B cell (primary cell): ENCODE measurements at regions of chr3 and their contacts with region 1.

Region 1: DNA sequence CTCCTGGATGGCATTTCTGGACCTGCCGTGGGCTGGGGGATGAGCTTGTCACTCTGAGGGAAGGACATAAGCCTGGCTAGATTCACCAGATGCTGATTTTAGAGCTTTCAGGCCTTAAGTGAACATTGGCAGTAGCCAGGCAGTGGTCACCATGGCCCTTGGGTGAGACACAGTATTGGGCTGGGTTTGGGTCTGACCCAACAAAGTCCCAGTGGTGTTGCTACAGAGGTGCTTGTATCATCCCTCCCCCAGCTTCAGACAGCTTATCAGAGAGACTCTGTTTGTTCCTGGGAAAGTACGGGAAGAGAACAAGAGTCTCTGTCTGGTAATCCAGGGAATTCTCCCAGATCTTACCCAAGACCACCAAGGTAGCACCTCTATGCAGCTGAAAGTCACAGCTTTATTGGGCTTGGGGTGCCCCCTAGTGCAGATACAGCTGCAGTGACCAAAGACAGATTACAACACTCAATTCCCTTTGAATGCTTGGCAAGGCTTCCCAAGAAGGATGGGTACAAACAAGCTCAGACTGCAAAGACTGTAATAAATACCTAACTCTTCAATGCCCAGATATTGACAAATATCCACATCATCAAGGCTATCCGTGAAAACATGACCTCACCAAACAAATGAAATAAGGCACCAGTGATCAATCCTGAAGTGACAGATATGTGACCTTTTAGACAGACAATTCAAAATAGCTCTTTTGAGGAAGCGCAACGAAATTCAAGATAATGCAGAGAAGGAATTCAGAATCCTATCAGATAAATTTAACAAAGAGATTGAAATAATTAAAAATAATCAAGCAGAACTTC is 9.9 kb upstream of the RUVBL1 start:
- DNase-seq: peak; percentile 49
- ATAC-seq: peak; percentile 49
- H3K4me3 ChIP-seq: no peak overlapping the region
- H3K4me3 Mint-ChIP-seq: no peak overlapping the region
- H3K27ac ChIP-seq: no peak overlapping the region
- H3K27ac Mint-ChIP-seq: no peak overlapping the region
- H3K4me1 ChIP-seq: no peaks in the 10 kb centered on the region
- H3K4me1 Mint-ChIP-seq: no peaks in the 10 kb centered on the region
- H3K27me3 ChIP-seq: peaks cover 0 to 3% (median 0%) of the 10 kb centered on the region in 4 experiments
- H3K27me3 Mint-ChIP-seq: peaks cover 17% of the 10 kb centered on the region
- CTCF ChIP-seq: peak; percentile 55

Region 2: GRCh38 chr3:127723011-127723567 is 410.4 kb before region 1 on chr3:
- CTCF ChIA-PET with region 1: no interaction called
- POLR2A ChIA-PET with region 1: no interaction called
- intact Hi-C with region 1: no loop called
- DNase-seq: no peak
- ATAC-seq: no peak
- H3K4me3 ChIP-seq: no peak overlapping the region
- H3K4me3 Mint-ChIP-seq: no peak overlapping the region
- H3K27ac ChIP-seq: no peak overlapping the region
- H3K27ac Mint-ChIP-seq: peak overlapping the region; percentile 11
- H3K4me1 ChIP-seq: no peaks in the 10 kb centered on the region
- H3K4me1 Mint-ChIP-seq: no peaks in the 10 kb centered on the region
- H3K27me3 ChIP-seq: no peaks in the 10 kb centered on the region
- H3K27me3 Mint-ChIP-seq: no peaks in the 10 kb centered on the region
- CTCF ChIP-seq: no peak

Region 3: GRCh38 chr3:128068211-128068620 is 65.3 kb before region 1 on chr3:
- CTCF ChIA-PET with region 1: interaction called, 14 read pairs
- POLR2A ChIA-PET with region 1: no interaction called
- intact Hi-C with region 1: no loop called
- DNase-seq: peak; percentile 57
- ATAC-seq: peak; percentile 53
- H3K4me3 ChIP-seq: no peak overlapping the region
- H3K4me3 Mint-ChIP-seq: no peak overlapping the region
- H3K27ac ChIP-seq: no peak overlapping the region
- H3K27ac Mint-ChIP-seq: no peak overlapping the region
- H3K4me1 ChIP-seq: no peaks in the 10 kb centered on the region
- H3K4me1 Mint-ChIP-seq: no peaks in the 10 kb centered on the region
- H3K27me3 ChIP-seq: no peaks in the 10 kb centered on the region
- H3K27me3 Mint-ChIP-seq: no peaks in the 10 kb centered on the region
- CTCF ChIP-seq: peak; percentile 79

Region 4: GRCh38 chr3:128095222-128095703 is 38.2 kb before region 1 on chr3:
- CTCF ChIA-PET with region 1: interaction called, 78 read pairs
- POLR2A ChIA-PET with region 1: no interaction called
- intact Hi-C with region 1: no loop called
- DNase-seq: peak; percentile 76
- ATAC-seq: peak; percentile 99
- H3K4me3 ChIP-seq: no peak overlapping the region
- H3K4me3 Mint-ChIP-seq: no peak overlapping the region
- H3K27ac ChIP-seq: no peak overlapping the region
- H3K27ac Mint-ChIP-seq: no peak overlapping the region
- H3K4me1 ChIP-seq: no peaks in the 10 kb centered on the region
- H3K4me1 Mint-ChIP-seq: no peaks in the 10 kb centered on the region
- H3K27me3 ChIP-seq: no peaks in the 10 kb centered on the region
- H3K27me3 Mint-ChIP-seq: no peaks in the 10 kb centered on the region
- CTCF ChIP-seq: peak; percentile 81